ENCODE measurements at regions of chr13 and their contacts with region 1.

Region 1: DNA sequence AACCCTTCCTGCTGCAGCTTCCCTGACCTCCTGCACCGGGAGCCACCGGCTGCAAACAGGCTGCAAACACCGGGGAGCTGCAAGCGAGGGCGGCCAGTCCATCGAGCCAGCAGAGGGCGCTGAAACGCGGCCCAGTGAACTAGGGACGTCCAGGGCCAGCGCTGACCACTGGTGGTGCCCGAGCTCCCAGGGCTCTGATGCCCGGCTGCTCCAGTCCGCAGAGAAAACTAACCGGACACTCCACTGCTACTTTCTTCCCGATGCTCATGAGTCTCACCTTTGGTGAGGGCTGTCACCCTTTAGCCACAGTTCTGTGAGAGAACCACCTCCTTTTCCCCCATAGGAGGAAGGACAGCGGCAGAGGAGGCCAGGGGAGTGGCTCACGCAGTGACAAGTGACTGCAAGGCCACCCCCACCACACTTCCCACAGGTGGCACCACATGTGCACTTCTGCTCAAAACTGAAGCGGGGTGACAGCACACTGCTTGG is 82.8 kb upstream of the MTIF3 start:
- DNase-seq: peak; percentile 94
- H3K4me3 ChIP-seq: peak overlapping the region in 4 of 8 donors; percentile 3 to 43 (median 20)
- H3K27ac ChIP-seq: no peak overlapping the region
- H3K4me1 ChIP-seq: peaks cover 0 to 11% (median 8%) of the 10 kb centered on the region in 6 donors
- H3K27me3 ChIP-seq: peaks cover 0 to 8% (median 0%) of the 10 kb centered on the region in 7 donors
- CTCF ChIP-seq: peak; percentile 58 to 91 (median 86)
- POLR2A ChIP-seq: no peak

Region 2: GRCh38 chr13:27302643-27303262 is 230.4 kb before region 1 on chr13:
- intact Hi-C with region 1: no loop called
- DNase-seq: no peak
- H3K4me3 ChIP-seq: no peak overlapping the region
- H3K27ac ChIP-seq: peak overlapping the region in 2 of 8 donors; percentile 40 to 52
- H3K4me1 ChIP-seq: peaks cover 0 to 13% (median 0%) of the 10 kb centered on the region in 6 donors
- H3K27me3 ChIP-seq: peaks cover 0 to 5% (median 0%) of the 10 kb centered on the region in 7 donors
- CTCF ChIP-seq: no peak
- POLR2A ChIP-seq: no peak

Region 3: GRCh38 chr13:27678306-27679040 is 145.3 kb after region 1 on chr13:
- intact Hi-C with region 1: no loop called
- DNase-seq: no peak
- H3K4me3 ChIP-seq: no peak overlapping the region
- H3K27ac ChIP-seq: no peak overlapping the region
- H3K4me1 ChIP-seq: no peaks in the 10 kb centered on the region
- H3K27me3 ChIP-seq: peaks cover 0 to 15% (median 0%) of the 10 kb centered on the region in 7 donors
- CTCF ChIP-seq: no peak
- POLR2A ChIP-seq: no peak

Region 4: GRCh38 chr13:27728271-27728670 is 195.1 kb after region 1 on chr13:
- intact Hi-C with region 1: loop called (anchors 10 kb)
- DNase-seq: no peak
- H3K4me3 ChIP-seq: no peak overlapping the region
- H3K27ac ChIP-seq: no peak overlapping the region
- H3K4me1 ChIP-seq: no peaks in the 10 kb centered on the region
- H3K27me3 ChIP-seq: peaks cover 0 to 19% (median 0%) of the 10 kb centered on the region in 7 donors
- CTCF ChIP-seq: no peak
- POLR2A ChIP-seq: no peak

Measured in spleen (tissue), 13 donors.